ENCODE measurements at regions of chr1 and their contacts with region 1.

Region 1: GRCh38 chr1:205273551-205273982 is 45.8 kb downstream of the TMCC2 start:
- DNase-seq: peak; percentile 90 to 94 (median 91)
- H3K4me3 ChIP-seq: no peak overlapping the region
- H3K27ac ChIP-seq: peak overlapping the region; percentile 74 to 84
- H3K4me1 ChIP-seq: peaks cover 0 to 30% (median 13%) of the 10 kb centered on the region in 3 donors
- H3K27me3 ChIP-seq: no peaks in the 10 kb centered on the region
- CTCF ChIP-seq: peak; percentile 99

Region 2: GRCh38 chr1:205325334-205325884 is 51.8 kb after region 1 on chr1:
- intact Hi-C with region 1: loop called (anchors 5 kb)
- DNase-seq: peak in 4 of 5 donors; percentile 83 to 90 (median 84)
- H3K4me3 ChIP-seq: peak overlapping the region in 1 of 3 donors; percentile 10
- H3K27ac ChIP-seq: peak overlapping the region; percentile 33 to 74
- H3K4me1 ChIP-seq: peaks cover 0 to 40% (median 30%) of the 10 kb centered on the region in 3 donors
- H3K27me3 ChIP-seq: no peaks in the 10 kb centered on the region
- CTCF ChIP-seq: peak; percentile 96

Region 3: GRCh38 chr1:205354259-205354904 is 80.8 kb after region 1 on chr1:
- intact Hi-C with region 1: no loop called
- DNase-seq: peak in 3 of 5 donors; percentile 50 to 86 (median 66)
- H3K4me3 ChIP-seq: no peak overlapping the region
- H3K27ac ChIP-seq: no peak overlapping the region
- H3K4me1 ChIP-seq: peaks cover 0 to 2% (median 0%) of the 10 kb centered on the region in 3 donors
- H3K27me3 ChIP-seq: no peaks in the 10 kb centered on the region
- CTCF ChIP-seq: peak; percentile 72

Measured in kidney (tissue), 22 donors.